Colonic mucosa (tissue), 4 donors: ENCODE measurements at regions of chr21 and their contacts with region 1.

Region 1: GRCh38 chr21:45287438-45288391 is at the start of gene POFUT2:
- DNase-seq: peak; percentile 98
- H3K4me3 ChIP-seq: peak within 1 kb of the TSS; percentile 55
- H3K27ac ChIP-seq: no peak within 1 kb of the TSS
- H3K4me1 ChIP-seq: peaks cover 12% of the 10 kb centered on the region
- H3K27me3 ChIP-seq: no peaks in the 10 kb centered on the region
- CTCF ChIP-seq: no peak
- total RNA-seq, gene POFUT2: 23.8 to 31.6 TPM

Region 2: GRCh38 chr21:45140346-45140940 is 147.3 kb before region 1 on chr21:
- intact Hi-C with region 1: loop called (anchors 10 kb)
- DNase-seq: peak; percentile 74
- H3K4me3 ChIP-seq: no peak overlapping the region
- H3K27ac ChIP-seq: no peak overlapping the region
- H3K4me1 ChIP-seq: no peaks in the 10 kb centered on the region
- H3K27me3 ChIP-seq: no peaks in the 10 kb centered on the region
- CTCF ChIP-seq: peak; percentile 76

Region 3: GRCh38 chr21:45439161-45439872 is 151.6 kb after region 1 on chr21:
- intact Hi-C with region 1: loop called (anchors 1 kb)
- DNase-seq: peak; percentile 86
- H3K4me3 ChIP-seq: peak overlapping the region; percentile 30
- H3K27ac ChIP-seq: peak overlapping the region; percentile 51
- H3K4me1 ChIP-seq: no peaks in the 10 kb centered on the region
- H3K27me3 ChIP-seq: no peaks in the 10 kb centered on the region
- CTCF ChIP-seq: peak; percentile 95